ENCODE measurements at regions of chr15 and their contacts with region 1.

Region 1: DNA sequence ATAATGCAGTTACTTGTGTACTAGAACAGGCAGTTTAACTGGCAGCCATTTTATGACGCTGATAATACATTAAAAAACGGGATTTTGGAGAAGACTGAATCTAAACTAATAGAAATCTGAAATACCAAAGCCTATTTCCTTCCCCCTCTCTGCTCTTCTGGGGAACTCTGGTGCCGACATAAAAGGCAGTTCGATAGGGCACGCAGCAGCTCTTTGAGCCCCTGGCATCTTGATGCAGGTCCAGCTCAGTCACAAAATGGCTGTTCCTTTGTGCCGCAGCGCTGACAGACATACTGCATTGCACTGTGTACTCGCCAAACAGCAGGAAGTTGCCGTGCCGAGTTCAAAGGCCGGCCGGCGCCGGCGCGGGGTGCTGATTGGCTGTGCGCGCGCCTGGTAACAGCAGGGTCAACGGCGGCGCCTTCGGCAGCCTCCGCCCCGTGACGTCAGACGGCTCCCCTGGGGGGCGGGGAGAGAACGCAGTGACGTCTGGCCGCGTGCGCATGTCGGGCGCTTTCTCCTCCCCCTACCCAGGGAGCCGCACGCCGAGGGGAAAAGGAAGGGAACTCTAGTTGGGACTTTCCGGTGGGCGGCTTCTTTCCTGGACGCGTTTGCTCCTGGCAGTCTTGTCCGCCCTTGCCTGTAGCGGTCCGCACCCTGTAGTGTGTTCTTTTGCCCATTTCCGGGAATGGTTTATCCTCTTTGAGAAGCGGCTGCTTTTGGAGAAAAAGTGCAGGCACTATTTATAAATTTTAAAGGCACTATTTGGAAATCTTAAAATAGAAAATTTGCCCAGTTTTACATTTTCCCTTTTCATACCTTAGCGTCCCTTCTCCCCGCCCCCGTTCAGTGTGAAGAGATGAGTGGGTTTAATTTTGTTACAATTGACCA is 4.1 kb downstream of the CHD2 start:
- DNase-seq: peak; percentile 99
- H3K4me3 ChIP-seq: peak overlapping the region; percentile 92
- H3K27ac ChIP-seq: peak overlapping the region; percentile 94
- H3K4me1 ChIP-seq: peaks cover 47% of the 10 kb centered on the region
- CTCF ChIP-seq: no peak

Region 2: DNA sequence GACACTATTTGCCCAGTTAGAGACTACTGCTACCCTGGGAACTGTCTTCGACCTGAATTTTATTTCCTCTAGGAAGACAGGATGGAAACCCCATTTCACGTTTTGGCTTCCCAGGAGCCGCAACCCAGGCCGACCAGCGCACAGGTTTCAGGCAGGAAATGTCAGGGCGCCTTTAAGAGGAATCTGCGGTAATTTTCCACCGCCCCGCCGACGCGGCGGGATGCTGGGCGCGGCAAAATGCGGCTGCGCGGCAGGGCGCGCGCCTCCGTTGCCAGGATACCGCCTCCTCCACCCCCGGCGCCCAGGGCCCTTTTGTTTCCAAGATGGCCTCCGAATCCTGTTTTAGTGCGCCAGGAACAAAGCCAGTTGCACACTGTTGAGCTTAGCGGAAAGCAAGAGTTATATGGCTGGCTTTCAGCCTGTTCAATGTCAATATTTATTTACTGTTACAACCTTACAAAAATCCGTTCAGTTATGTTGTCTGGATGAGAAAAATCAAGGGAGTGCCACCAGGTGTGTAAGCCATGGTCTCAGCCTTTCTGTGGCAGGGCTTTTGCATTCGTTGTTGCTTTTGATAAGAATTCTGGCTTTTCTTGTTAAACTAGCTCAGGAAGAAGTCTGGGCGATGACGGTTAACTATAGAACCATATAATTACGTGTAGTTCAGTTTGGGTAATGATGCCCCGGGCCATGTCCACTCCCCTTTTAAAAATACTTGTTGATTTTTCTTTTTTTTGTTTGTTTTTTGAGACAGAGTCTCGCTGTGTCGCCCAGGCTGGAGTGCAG is 83.8 kb before region 1 on chr15:
- CTCF ChIA-PET with region 1: interaction called, 3 read pairs
- POLR2A ChIA-PET with region 1: interaction called, 26 read pairs
- intact Hi-C with region 1: no loop called
- DNase-seq: peak; percentile 91
- H3K4me3 ChIP-seq: peak overlapping the region; percentile 58
- H3K27ac ChIP-seq: peak overlapping the region; percentile 71
- H3K4me1 ChIP-seq: peaks cover 74% of the 10 kb centered on the region
- CTCF ChIP-seq: no peak

Region 3: DNA sequence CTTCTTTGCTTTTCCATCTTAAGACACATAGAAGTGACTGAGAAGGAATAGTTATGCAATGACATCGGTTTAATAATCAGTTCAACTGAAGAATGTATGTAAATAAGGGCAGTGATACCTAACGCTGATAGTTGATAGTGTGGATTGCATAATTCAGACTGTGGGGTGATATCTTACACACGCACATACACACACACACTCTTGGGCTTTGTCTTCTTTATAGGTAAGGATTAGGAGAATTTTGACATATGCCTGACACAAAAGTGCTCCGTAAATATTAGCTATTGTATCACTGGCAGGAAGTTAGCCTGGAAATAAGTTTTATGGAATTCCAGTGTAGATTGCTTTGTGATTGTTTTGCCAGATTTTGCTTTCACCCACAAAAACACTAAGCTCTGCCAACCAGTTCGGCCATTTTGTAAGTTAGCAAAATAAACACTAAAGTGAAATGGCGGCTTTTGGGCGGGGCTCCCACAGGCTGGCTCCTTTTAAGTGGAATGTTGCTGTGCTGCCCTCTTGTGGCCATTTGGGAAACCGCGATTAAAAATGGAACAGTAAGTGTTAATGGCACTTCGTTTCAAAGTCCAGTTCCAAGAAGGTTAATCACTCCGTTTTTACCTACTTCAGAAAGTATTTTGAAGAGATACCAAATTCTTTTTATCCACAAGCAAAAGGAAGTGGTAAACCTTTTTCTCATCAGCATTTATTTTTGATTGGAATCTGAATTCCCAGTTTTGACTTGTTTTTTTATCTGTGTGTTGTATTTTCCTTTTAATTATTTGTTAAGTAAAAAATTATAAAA is 13.6 kb after region 1 on chr15:
- CTCF ChIA-PET with region 1: interaction called, 3 read pairs
- POLR2A ChIA-PET with region 1: interaction called, 22 read pairs
- intact Hi-C with region 1: no loop called
- DNase-seq: peak; percentile 95
- H3K4me3 ChIP-seq: peak overlapping the region; percentile 2
- H3K27ac ChIP-seq: peak overlapping the region; percentile 74
- H3K4me1 ChIP-seq: peaks cover 73% of the 10 kb centered on the region
- CTCF ChIP-seq: peak; percentile 99

Measured in OCI-LY7 (cell line).